Activated B cell treated with CpG ODN at 0.5 μM for 24 hours (primary cell): ENCODE measurements at regions of chr5 and their contacts with region 1.

Region 1: DNA sequence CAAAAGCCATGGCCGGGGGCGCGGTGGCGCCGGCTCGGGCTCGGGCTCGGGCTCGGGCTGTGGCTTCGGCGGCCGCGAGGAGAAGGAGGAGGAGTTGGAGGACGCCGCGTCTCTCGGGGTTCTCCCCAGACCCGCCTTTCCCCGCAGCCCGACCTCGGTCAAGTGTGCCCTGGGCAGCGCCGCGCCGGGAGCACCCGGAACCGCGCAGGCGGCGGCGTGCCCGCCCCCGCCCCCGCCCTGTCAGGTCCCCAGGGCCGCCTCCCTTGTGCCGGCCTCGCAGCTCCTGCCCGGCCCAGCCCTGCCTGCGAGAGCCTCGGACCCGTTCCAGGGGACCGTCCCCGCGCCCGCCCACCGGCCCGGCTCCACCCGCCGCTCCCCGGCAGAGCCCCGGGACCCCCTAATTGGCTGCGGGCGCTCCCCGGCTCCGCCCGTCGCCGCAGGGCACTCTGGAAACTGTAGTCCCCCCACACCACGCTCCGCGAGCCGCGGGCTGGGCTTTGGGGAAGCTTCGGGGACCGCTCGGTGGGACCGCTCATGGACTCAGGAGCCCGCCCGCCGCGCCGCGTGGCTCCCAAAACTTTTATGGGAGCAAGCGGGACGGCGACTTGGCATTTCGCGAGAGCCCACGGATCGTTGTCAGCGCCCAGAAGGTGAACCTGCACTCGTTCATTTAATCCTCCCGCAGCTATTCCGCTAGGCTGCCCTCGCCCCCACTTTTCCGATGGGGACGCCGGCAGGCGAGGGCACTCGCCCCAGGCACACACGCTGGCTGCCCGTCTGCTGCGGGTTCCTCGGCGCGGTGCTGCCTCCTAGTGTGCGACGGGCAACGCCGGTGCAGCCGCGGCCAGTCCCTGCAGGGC is at the start of gene STK10:
- DNase-seq: peak; percentile 88
- ATAC-seq: peak; percentile 75
- H3K4me3 Mint-ChIP-seq: peak within 1 kb of the TSS; percentile 100
- H3K27ac Mint-ChIP-seq: peak within 1 kb of the TSS; percentile 97
- H3K4me1 Mint-ChIP-seq: peaks cover 44% of the 10 kb centered on the region
- H3K27me3 Mint-ChIP-seq: no peaks in the 10 kb centered on the region
- CTCF ChIP-seq: peak; percentile 37
- total RNA-seq, gene STK10: 233 and 276 TPM in 2 replicates

Region 2: GRCh38 chr5:171907725-171908343 is 280.4 kb before region 1 on chr5:
- CTCF ChIA-PET with region 1: interaction called, 17 read pairs
- POLR2A ChIA-PET with region 1: no interaction called
- intact Hi-C with region 1: loop called (anchors 1 kb)
- DNase-seq: no peak
- ATAC-seq: peak; percentile 73
- H3K4me3 Mint-ChIP-seq: no peak overlapping the region
- H3K27ac Mint-ChIP-seq: peak overlapping the region; percentile 15
- H3K4me1 Mint-ChIP-seq: peaks cover 49% of the 10 kb centered on the region
- H3K27me3 Mint-ChIP-seq: no peaks in the 10 kb centered on the region
- CTCF ChIP-seq: no peak

Region 3: DNA sequence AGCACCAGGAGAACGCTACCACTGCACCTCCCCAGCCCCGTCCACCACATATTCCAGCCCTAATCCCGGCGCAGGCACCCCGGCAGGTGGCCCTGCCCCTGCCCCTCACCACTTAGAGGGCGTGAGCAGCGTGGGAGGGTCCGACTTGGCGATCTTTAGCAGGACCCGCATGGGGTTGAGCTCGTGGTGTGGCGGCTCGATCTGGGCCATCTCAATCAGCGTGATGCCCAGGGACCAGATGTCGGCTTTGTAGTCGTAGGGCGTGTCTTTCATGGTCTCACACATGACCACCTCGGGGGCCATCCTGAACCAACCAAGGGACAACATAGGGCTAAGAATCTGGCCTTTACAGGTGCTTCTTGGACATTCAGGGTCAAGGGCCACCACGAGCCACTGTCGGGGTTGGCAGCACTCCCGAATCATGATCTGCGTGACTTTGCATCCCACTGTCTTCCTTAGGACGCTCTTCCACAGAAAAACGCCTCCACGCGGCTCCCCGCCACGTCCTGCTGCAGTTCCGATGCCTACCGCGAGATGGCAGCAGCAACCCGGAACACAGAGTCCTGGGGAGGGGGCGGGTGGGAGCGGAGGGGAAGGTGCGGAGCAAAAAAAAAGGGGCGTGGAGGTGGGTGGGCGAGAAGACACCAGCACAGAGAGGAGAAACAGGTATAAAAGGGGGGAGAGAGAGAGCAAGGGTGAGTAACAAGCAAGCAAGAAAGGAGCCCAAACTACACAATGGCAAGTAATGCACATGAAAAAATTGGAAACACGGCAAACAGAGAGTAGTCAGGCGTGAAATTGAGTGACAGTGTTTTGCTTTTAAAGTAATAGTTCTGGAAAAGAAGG is 81.5 kb before region 1 on chr5:
- CTCF ChIA-PET with region 1: interaction called, 94 read pairs
- POLR2A ChIA-PET with region 1: interaction called, 138 read pairs
- intact Hi-C with region 1: loop called (anchors 1 kb)
- DNase-seq: peak; percentile 71
- ATAC-seq: no peak
- H3K4me3 Mint-ChIP-seq: no peak overlapping the region
- H3K27ac Mint-ChIP-seq: peak overlapping the region; percentile 68
- H3K4me1 Mint-ChIP-seq: peaks cover 41% of the 10 kb centered on the region
- H3K27me3 Mint-ChIP-seq: no peaks in the 10 kb centered on the region
- CTCF ChIP-seq: peak; percentile 34

Region 4: GRCh38 chr5:172144291-172144815 is 43.9 kb before region 1 on chr5:
- CTCF ChIA-PET with region 1: interaction called, 3 read pairs
- POLR2A ChIA-PET with region 1: interaction called, 7 read pairs
- intact Hi-C with region 1: loop called (anchors 1 kb)
- DNase-seq: no peak
- ATAC-seq: peak; percentile 92
- H3K4me3 Mint-ChIP-seq: peak overlapping the region; percentile 7
- H3K27ac Mint-ChIP-seq: peak overlapping the region; percentile 85
- H3K4me1 Mint-ChIP-seq: peaks cover 73% of the 10 kb centered on the region
- H3K27me3 Mint-ChIP-seq: no peaks in the 10 kb centered on the region
- CTCF ChIP-seq: no peak

Region 5: DNA sequence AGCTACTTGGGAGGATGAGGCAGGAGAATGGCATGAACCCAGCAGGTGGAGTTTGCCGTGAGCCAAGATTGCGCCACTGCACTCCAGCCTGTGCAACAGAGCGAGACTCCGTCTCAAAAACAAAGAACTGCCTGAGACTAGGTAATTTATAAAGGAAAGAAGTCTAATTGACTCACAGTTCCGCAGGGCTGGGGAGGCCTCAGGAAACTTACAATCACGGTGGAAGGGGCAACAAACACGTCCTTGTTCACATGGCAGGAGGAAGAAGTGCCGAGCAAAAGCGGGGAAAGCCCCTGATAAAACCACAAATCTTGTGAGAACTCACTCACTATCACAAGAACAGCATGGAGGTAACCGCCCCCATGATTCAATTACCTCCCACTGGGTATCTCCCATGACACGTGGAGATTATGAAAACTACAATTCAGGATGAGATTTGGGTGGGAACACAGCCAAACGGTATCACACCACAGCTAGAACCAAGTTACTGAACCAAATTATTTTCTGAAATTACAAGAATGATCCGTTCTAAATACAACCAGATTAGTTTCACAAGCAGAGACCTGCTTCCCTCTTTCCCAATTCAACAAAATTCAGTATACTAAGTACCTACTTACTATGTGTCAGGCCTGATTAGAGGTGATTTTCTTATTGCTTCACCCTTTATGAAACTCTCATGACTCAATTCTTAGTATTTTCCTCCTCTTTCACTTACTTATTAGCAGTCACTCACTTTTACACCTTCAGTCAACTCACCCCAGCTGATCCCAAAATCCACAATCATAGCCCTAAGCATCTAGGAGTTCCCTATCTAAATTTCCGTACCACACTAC is 86.9 kb after region 1 on chr5:
- CTCF ChIA-PET with region 1: interaction called, 3 read pairs
- POLR2A ChIA-PET with region 1: interaction called, 5 read pairs
- intact Hi-C with region 1: loop called (anchors 2 kb)
- DNase-seq: peak; percentile 25
- ATAC-seq: peak; percentile 92
- H3K4me3 Mint-ChIP-seq: peak overlapping the region; percentile 44
- H3K27ac Mint-ChIP-seq: peak overlapping the region; percentile 76
- H3K4me1 Mint-ChIP-seq: peaks cover 38% of the 10 kb centered on the region
- H3K27me3 Mint-ChIP-seq: no peaks in the 10 kb centered on the region
- CTCF ChIP-seq: no peak

Region 6: GRCh38 chr5:172293054-172293744 is 104.9 kb after region 1 on chr5:
- CTCF ChIA-PET with region 1: interaction called, 11 read pairs
- POLR2A ChIA-PET with region 1: no interaction called
- intact Hi-C with region 1: loop called (anchors 1 kb)
- DNase-seq: peak; percentile 21
- ATAC-seq: peak; percentile 100
- H3K4me3 Mint-ChIP-seq: no peak overlapping the region
- H3K27ac Mint-ChIP-seq: no peak overlapping the region
- H3K4me1 Mint-ChIP-seq: peaks cover 2% of the 10 kb centered on the region
- H3K27me3 Mint-ChIP-seq: peaks cover 3% of the 10 kb centered on the region
- CTCF ChIP-seq: peak; percentile 67

Region 7: GRCh38 chr5:172443441-172444109 is 255.3 kb after region 1 on chr5:
- CTCF ChIA-PET with region 1: no interaction called
- POLR2A ChIA-PET with region 1: no interaction called
- intact Hi-C with region 1: no loop called
- DNase-seq: no peak
- ATAC-seq: no peak
- H3K4me3 Mint-ChIP-seq: no peak overlapping the region
- H3K27ac Mint-ChIP-seq: no peak overlapping the region
- H3K4me1 Mint-ChIP-seq: no peaks in the 10 kb centered on the region
- H3K27me3 Mint-ChIP-seq: peaks cover 3% of the 10 kb centered on the region
- CTCF ChIP-seq: no peak